GM12878 (cell line): ENCODE measurements at regions of chr4 and their contacts with region 1.

Region 1: DNA sequence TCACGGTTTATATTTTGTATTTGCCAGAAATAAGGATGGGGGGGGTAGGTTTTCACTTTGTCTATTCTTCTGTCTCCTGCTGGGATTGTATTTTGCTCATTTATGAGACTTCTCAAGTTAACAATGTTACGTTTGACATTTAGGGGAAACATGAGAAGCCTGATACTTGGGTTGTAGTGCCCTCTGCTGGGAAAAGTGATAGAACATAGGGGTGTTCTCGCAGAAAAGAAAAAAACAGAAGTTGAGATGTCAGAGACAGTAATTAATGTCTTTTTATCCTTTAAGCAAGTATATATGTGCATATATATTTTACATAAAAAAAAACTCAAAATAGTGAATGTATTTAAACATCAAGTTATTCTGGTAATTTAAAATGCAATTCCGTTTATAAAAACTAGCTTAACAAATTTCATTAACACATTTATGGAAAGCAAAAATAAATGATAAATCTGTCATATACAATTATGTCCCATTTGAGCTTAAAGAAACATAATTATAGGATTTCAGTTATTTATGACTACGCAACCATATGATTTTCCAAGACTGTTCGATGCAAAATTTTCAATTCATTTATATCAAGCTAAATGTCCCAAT is 46.0 kb upstream of the TMPRSS11F start:
- DNase-seq: peak; percentile 20
- ATAC-seq: peak; percentile 88
- H3K4me3 ChIP-seq: no peak overlapping the region
- H3K27ac ChIP-seq: no peak overlapping the region
- H3K4me1 ChIP-seq: no peaks in the 10 kb centered on the region
- H3K27me3 ChIP-seq: no peaks in the 10 kb centered on the region
- CTCF ChIP-seq: peak; percentile 55 to 73 (median 67)
- EP300 ChIP-seq: no peak
- POLR2A ChIP-seq: no peak
- RAD21 ChIP-seq: peak; percentile 90

Region 2: GRCh38 chr4:67871867-67872266 is 303.8 kb before region 1 on chr4:
- CTCF ChIA-PET with region 1: interaction called, 3 read pairs
- POLR2A ChIA-PET with region 1: no interaction called
- RAD21 ChIA-PET with region 1: no interaction called
- SMC1A ChIA-PET with region 1: no interaction called
- in situ Hi-C with region 1: no loop called
- intact Hi-C with region 1: loop called (anchors 5 kb)
- DNase-seq: no peak
- ATAC-seq: peak; percentile 95
- H3K4me3 ChIP-seq: no peak overlapping the region
- H3K27ac ChIP-seq: no peak overlapping the region
- H3K4me1 ChIP-seq: no peaks in the 10 kb centered on the region
- H3K27me3 ChIP-seq: no peaks in the 10 kb centered on the region
- CTCF ChIP-seq: peak; percentile 37 to 52 (median 47); a peak in 4 of 6 replicates
- EP300 ChIP-seq: no peak
- POLR2A ChIP-seq: no peak
- RAD21 ChIP-seq: peak; percentile 24; the same call in 1 of the 2 replicates

Region 3: DNA sequence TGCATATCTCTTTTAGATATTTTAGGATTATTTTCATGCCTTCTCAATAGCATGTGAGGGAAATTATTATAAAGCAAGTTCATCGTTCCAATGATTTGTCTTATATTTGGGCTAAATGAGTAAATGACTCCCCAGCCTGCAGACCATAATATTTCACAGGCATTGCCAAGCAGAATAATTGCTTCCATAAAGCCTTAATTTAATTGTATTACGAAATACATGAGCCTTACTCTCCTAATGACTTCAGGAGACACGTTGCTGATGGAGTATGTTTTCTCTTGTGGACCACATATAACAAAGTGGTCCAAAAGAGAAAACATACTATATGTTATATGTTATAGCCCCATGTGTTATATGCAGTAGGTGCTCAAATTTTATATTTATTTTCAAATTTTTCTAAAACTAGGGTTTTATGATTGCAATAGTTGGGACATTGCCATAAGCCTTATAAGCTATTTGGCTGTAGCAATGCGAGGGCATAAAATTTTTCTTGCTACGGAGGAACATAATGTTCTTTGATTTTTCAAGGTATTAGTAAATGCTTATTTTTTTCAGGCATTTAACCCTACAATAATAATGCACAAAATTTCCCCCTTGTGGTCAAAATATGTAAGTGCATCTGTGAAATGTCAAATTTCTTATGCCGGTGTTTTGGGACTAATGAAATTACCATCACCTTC is 265.6 kb before region 1 on chr4:
- CTCF ChIA-PET with region 1: interaction called, 3 read pairs
- POLR2A ChIA-PET with region 1: no interaction called
- RAD21 ChIA-PET with region 1: no interaction called
- SMC1A ChIA-PET with region 1: no interaction called
- in situ Hi-C with region 1: no loop called
- intact Hi-C with region 1: loop called (anchors 10 kb)
- DNase-seq: no peak
- ATAC-seq: peak; percentile 40; the same call in 1 of the 3 replicates
- H3K4me3 ChIP-seq: no peak overlapping the region
- H3K27ac ChIP-seq: no peak overlapping the region
- H3K4me1 ChIP-seq: no peaks in the 10 kb centered on the region
- H3K27me3 ChIP-seq: no peaks in the 10 kb centered on the region
- CTCF ChIP-seq: peak; percentile 44 to 54 (median 51); a peak in 5 of 6 replicates
- EP300 ChIP-seq: no peak
- POLR2A ChIP-seq: no peak
- RAD21 ChIP-seq: peak; percentile 57

Region 4: GRCh38 chr4:67988991-67989390 is 186.7 kb before region 1 on chr4:
- CTCF ChIA-PET with region 1: interaction called, 7 read pairs
- POLR2A ChIA-PET with region 1: no interaction called
- RAD21 ChIA-PET with region 1: interaction called, 3 read pairs
- SMC1A ChIA-PET with region 1: interaction called, 5 read pairs
- in situ Hi-C with region 1: loop called (anchors 5 kb)
- intact Hi-C with region 1: loop called (anchors 1 kb)
- DNase-seq: no peak
- ATAC-seq: no peak
- H3K4me3 ChIP-seq: no peak overlapping the region
- H3K27ac ChIP-seq: no peak overlapping the region
- H3K4me1 ChIP-seq: no peaks in the 10 kb centered on the region
- H3K27me3 ChIP-seq: no peaks in the 10 kb centered on the region
- CTCF ChIP-seq: no peak
- EP300 ChIP-seq: no peak
- POLR2A ChIP-seq: no peak
- RAD21 ChIP-seq: no peak